ENCODE measurements at regions of chr6 and their contacts with region 1.

Region 1: GRCh38 chr6:149028767-149029405 is 282.1 kb downstream of the UST start:
- DNase-seq: peak; percentile 16 to 88 (median 68)
- ATAC-seq: peak; percentile 70
- H3K4me3 ChIP-seq: no peak overlapping the region
- H3K4me3 Mint-ChIP-seq: no peak overlapping the region
- H3K27ac ChIP-seq: no peak overlapping the region
- H3K27ac Mint-ChIP-seq: no peak overlapping the region
- H3K4me1 ChIP-seq: no peaks in the 10 kb centered on the region
- H3K4me1 Mint-ChIP-seq: peaks cover 25% of the 10 kb centered on the region
- H3K27me3 ChIP-seq: no peaks in the 10 kb centered on the region
- H3K27me3 Mint-ChIP-seq: no peaks in the 10 kb centered on the region
- CTCF ChIP-seq: peak; percentile 91

Region 2: DNA sequence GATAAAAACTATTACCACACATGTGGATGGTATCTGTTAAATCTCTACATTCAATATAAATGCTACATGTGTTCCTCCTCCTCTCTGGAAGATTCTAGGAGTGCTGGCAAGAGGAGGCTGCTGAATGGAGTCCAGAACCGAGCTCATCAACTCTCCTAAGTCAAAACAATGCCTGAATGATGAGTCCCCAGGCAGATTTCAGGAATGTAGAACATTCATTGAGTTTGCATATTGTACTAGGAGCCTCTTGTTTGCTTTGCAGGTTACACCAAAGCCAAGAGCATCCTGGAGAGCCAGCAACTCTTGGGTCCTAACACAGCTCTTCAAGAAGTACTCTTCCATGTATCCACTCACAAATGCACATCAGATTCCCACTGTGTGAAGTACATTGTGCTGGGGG is 399.7 kb before region 1 on chr6:
- CTCF ChIA-PET with region 1: no interaction called
- POLR2A ChIA-PET with region 1: no interaction called
- intact Hi-C with region 1: no loop called
- DNase-seq: no peak
- ATAC-seq: no peak
- H3K4me3 ChIP-seq: no peak overlapping the region
- H3K4me3 Mint-ChIP-seq: no peak overlapping the region
- H3K27ac ChIP-seq: no peak overlapping the region
- H3K27ac Mint-ChIP-seq: no peak overlapping the region
- H3K4me1 ChIP-seq: no peaks in the 10 kb centered on the region
- H3K4me1 Mint-ChIP-seq: no peaks in the 10 kb centered on the region
- H3K27me3 ChIP-seq: no peaks in the 10 kb centered on the region
- H3K27me3 Mint-ChIP-seq: no peaks in the 10 kb centered on the region
- CTCF ChIP-seq: no peak

Region 3: GRCh38 chr6:149045404-149045803 is 16.5 kb after region 1 on chr6:
- CTCF ChIA-PET with region 1: interaction called, 14 read pairs
- POLR2A ChIA-PET with region 1: interaction called, 3 read pairs
- intact Hi-C with region 1: no loop called
- DNase-seq: peak in 3 of 9 experiments; percentile 24 to 50 (median 33)
- ATAC-seq: peak; percentile 84
- H3K4me3 ChIP-seq: no peak overlapping the region
- H3K4me3 Mint-ChIP-seq: no peak overlapping the region
- H3K27ac ChIP-seq: no peak overlapping the region
- H3K27ac Mint-ChIP-seq: no peak overlapping the region
- H3K4me1 ChIP-seq: peaks cover 30% of the 10 kb centered on the region
- H3K4me1 Mint-ChIP-seq: peaks cover 31% of the 10 kb centered on the region
- H3K27me3 ChIP-seq: no peaks in the 10 kb centered on the region
- H3K27me3 Mint-ChIP-seq: no peaks in the 10 kb centered on the region
- CTCF ChIP-seq: no peak

Region 4: DNA sequence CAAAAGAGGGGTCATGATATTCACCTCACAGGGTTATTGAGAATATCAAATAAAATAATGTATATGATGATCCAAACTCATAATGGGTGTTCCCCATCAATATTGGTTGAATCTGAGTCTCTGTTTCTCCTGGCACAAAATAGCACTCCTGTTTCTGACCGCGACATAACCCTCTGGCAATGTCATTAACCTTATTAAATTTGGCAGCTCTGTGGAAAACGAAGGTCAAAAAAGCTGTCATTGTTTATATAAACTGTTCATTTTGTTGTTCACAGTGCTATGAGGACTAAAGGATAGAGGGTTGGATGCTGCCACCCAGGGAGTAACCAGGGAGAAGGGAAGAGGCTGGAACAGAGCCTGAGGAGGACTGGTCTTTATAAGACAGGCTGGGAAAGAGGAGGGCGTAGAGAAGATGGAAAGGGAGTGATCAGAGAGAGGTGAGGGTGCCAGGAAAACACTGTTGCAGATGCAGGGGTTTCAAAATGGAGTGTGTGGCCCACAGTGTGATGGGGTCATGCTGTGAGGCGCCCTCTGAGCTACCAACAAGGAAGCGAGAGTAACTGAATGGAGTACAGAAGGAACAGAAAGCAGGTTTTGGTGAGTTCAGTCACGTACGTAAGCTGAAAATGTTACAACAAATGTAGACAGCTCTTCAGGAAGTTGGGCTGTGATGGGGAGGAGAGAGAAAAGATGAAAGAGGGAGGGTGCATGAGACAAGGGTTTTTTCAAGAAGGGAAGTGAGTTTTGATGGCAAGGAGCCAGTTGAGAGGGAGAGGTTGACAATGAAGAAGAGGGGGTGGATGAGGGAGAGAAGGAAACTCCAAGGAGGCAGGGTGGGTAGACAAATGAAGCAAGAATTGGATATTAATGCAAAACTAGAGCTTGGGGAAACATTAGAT is 37.0 kb after region 1 on chr6:
- CTCF ChIA-PET with region 1: interaction called, 14 read pairs
- POLR2A ChIA-PET with region 1: interaction called, 5 read pairs
- intact Hi-C with region 1: no loop called
- DNase-seq: peak in 8 of 9 experiments; percentile 11 to 90 (median 54)
- ATAC-seq: peak; percentile 96
- H3K4me3 ChIP-seq: peak overlapping the region in 1 of 2 experiments; percentile 5
- H3K4me3 Mint-ChIP-seq: peak overlapping the region; percentile 44
- H3K27ac ChIP-seq: peak overlapping the region; percentile 51 to 62
- H3K27ac Mint-ChIP-seq: peak overlapping the region; percentile 96
- H3K4me1 ChIP-seq: peaks cover 24% of the 10 kb centered on the region
- H3K4me1 Mint-ChIP-seq: peaks cover 27% of the 10 kb centered on the region
- H3K27me3 ChIP-seq: no peaks in the 10 kb centered on the region
- H3K27me3 Mint-ChIP-seq: no peaks in the 10 kb centered on the region
- CTCF ChIP-seq: no peak

Region 5: GRCh38 chr6:149342525-149342924 is 313.6 kb after region 1 on chr6:
- CTCF ChIA-PET with region 1: no interaction called
- POLR2A ChIA-PET with region 1: no interaction called
- intact Hi-C with region 1: no loop called
- DNase-seq: no peak
- ATAC-seq: no peak
- H3K4me3 ChIP-seq: no peak overlapping the region
- H3K4me3 Mint-ChIP-seq: no peak overlapping the region
- H3K27ac ChIP-seq: no peak overlapping the region
- H3K27ac Mint-ChIP-seq: peak overlapping the region; percentile 63
- H3K4me1 ChIP-seq: peaks cover 38% of the 10 kb centered on the region
- H3K4me1 Mint-ChIP-seq: peaks cover 82% of the 10 kb centered on the region
- H3K27me3 ChIP-seq: no peaks in the 10 kb centered on the region
- H3K27me3 Mint-ChIP-seq: no peaks in the 10 kb centered on the region
- CTCF ChIP-seq: no peak

Region 6: GRCh38 chr6:149443411-149444181 is 414.7 kb after region 1 on chr6:
- CTCF ChIA-PET with region 1: interaction called, 14 read pairs
- POLR2A ChIA-PET with region 1: interaction called, 4 read pairs
- intact Hi-C with region 1: no loop called
- DNase-seq: no peak
- ATAC-seq: no peak
- H3K4me3 ChIP-seq: no peak overlapping the region
- H3K4me3 Mint-ChIP-seq: no peak overlapping the region
- H3K27ac ChIP-seq: no peak overlapping the region
- H3K27ac Mint-ChIP-seq: no peak overlapping the region
- H3K4me1 ChIP-seq: no peaks in the 10 kb centered on the region
- H3K4me1 Mint-ChIP-seq: no peaks in the 10 kb centered on the region
- H3K27me3 ChIP-seq: no peaks in the 10 kb centered on the region
- H3K27me3 Mint-ChIP-seq: no peaks in the 10 kb centered on the region
- CTCF ChIP-seq: no peak

Measured in CD8-positive, alpha-beta T cell (primary cell).